ENCODE measurements at regions of chr13 and their contacts with region 1.

Region 1: GRCh38 chr13:108155185-108156106 is 59.9 kb downstream of the LIG4 start:
- DNase-seq: no peak
- ATAC-seq: no peak

Region 2: GRCh38 chr13:107211073-107211472 is 944.4 kb before region 1 on chr13:
- intact Hi-C with region 1: loop called (anchors 2 kb)
- DNase-seq: peak; percentile 67
- ATAC-seq: peak; percentile 84

Region 3: GRCh38 chr13:108200781-108201398 is 45.4 kb after region 1 on chr13:
- intact Hi-C with region 1: no loop called
- DNase-seq: no peak
- ATAC-seq: no peak

Region 4: GRCh38 chr13:108227651-108228272 is 72.3 kb after region 1 on chr13:
- intact Hi-C with region 1: no loop called
- DNase-seq: no peak
- ATAC-seq: no peak

Measured in Right ventricle myocardium inferior (tissue), 1 donor.